ENCODE measurements at regions of chr3 and their contacts with region 1.

Region 1: DNA sequence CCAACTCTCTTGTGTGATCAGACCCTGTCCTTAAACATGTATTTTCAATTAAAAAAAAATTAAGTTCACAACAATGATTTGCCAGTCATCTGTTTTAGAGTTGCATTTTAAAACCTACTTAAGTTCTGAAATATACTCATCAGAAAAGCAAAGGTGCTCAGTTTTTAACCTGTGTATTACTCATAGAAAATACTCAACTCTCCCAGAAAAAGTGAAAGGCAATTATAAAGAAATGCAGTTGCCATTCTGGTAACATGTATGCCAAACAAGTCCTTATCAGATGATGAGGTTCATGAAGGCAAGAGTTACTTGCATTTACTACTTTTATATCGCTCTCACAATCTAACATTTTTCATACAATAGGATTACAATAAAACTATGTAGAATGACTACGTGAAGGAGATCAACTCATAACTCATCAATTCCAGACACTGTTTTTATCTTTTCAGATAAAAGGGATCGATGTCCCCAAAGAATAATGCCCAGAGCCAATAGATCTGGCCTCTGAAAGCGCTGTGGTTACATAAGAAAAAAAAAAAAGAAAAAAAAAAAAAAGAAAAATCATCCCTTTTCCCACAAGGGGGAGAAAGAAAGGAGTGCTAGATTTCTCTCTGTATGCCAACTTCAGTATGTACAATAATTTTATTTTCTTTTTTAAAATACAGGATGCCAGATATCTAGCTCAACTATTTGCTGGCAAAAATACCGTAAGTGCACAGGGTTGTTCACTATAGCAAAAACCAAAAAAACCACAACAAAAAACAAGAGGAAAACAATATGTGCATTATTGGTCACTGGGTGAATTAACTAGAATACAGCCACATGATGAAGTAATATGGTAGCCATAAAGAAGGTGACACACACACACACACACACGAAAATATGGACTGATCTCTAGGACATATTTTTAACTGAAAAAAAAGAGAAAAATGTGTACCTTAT is 137.4 kb downstream of the NR1I2 start:
- DNase-seq: no peak
- ATAC-seq: no peak; the same call in 1 of the 2 replicates
- H3K4me3 ChIP-seq: no peak overlapping the region
- H3K27ac ChIP-seq: no peak overlapping the region
- H3K4me1 ChIP-seq: peaks cover under 1% of the 10 kb centered on the region; the same call in 1 of the 2 replicates
- H3K27me3 ChIP-seq: no peaks in the 10 kb centered on the region
- CTCF ChIP-seq: no peak; the same call in 1 of the 2 replicates

Region 2: DNA sequence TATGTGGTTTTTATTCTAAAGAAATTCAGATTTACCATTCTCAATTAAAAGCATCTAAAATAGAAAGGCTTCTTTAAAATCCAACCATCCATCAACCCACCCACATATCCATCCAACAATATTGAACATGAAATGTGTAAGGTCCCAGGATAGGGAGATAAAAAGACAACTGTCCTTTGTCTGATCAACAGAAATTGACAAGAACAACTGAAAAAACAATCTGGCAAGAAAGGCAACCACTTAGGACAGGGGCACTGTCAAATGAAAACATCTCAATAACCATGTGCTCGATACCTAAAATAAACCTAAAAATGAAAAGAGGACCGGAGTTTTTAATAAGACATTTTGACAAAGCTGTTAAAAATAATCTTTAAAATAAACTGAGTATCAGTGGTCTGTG is 70.1 kb before region 1 on chr3:
- CTCF ChIA-PET with region 1: interaction called, 12 read pairs
- POLR2A ChIA-PET with region 1: no interaction called
- intact Hi-C with region 1: no loop called
- DNase-seq: no peak
- ATAC-seq: no peak
- H3K4me3 ChIP-seq: no peak overlapping the region
- H3K27ac ChIP-seq: no peak overlapping the region
- H3K4me1 ChIP-seq: no peaks in the 10 kb centered on the region
- H3K27me3 ChIP-seq: no peaks in the 10 kb centered on the region
- CTCF ChIP-seq: no peak

Region 3: GRCh38 chr3:119955972-119956371 is 36.7 kb after region 1 on chr3:
- CTCF ChIA-PET with region 1: no interaction called
- POLR2A ChIA-PET with region 1: interaction called, 16 read pairs
- intact Hi-C with region 1: no loop called
- DNase-seq: no peak
- ATAC-seq: no peak
- H3K4me3 ChIP-seq: no peak overlapping the region
- H3K27ac ChIP-seq: no peak overlapping the region
- H3K4me1 ChIP-seq: no peaks in the 10 kb centered on the region
- H3K27me3 ChIP-seq: no peaks in the 10 kb centered on the region
- CTCF ChIP-seq: no peak

Region 4: DNA sequence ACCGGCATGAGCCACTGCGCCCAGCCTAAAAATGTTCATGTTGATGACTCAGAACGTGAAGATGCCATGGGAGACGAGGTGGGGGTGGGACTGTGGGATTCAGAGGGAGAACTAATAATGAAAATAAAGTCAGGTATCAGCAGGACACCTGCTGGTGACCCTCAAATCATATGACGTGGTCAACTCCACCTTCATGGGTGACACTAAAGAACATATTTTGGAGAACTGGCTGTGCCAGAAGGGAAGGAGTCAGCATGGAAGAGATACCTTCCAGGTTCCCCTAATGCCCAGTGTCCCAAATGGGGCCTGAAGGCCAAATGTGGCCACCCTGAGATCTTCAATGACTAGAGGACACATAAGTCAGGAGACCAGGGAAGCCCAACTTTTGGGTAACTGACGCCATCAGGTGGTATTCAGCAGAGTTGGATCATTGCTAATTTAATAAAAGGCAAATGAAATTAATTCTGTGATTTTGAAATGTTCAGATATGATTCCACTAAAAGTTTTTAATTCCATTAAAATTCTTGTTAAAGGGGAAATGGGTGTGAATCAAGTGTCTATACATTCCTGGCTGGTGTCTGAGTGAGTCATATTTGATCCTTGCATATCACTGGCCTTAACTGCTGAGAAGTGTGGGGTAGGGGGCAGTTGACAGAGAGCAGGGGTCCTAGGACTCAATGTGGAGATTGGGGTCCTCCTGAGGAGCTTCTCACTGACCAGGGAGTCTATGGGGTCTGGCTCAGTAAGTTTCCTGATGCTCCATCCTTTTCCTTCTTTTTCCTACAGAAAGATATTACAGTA is 263.7 kb after region 1 on chr3:
- CTCF ChIA-PET with region 1: no interaction called
- POLR2A ChIA-PET with region 1: no interaction called
- intact Hi-C with region 1: loop called (anchors 1 kb)
- DNase-seq: peak; percentile 67
- ATAC-seq: peak; percentile 68
- H3K4me3 ChIP-seq: no peak overlapping the region
- H3K27ac ChIP-seq: no peak overlapping the region
- H3K4me1 ChIP-seq: peaks cover 32% of the 10 kb centered on the region
- H3K27me3 ChIP-seq: no peaks in the 10 kb centered on the region
- CTCF ChIP-seq: peak; percentile 91